Caco-2 (cell line): ENCODE measurements at regions of chr3 and their contacts with region 1.

Region 1: DNA sequence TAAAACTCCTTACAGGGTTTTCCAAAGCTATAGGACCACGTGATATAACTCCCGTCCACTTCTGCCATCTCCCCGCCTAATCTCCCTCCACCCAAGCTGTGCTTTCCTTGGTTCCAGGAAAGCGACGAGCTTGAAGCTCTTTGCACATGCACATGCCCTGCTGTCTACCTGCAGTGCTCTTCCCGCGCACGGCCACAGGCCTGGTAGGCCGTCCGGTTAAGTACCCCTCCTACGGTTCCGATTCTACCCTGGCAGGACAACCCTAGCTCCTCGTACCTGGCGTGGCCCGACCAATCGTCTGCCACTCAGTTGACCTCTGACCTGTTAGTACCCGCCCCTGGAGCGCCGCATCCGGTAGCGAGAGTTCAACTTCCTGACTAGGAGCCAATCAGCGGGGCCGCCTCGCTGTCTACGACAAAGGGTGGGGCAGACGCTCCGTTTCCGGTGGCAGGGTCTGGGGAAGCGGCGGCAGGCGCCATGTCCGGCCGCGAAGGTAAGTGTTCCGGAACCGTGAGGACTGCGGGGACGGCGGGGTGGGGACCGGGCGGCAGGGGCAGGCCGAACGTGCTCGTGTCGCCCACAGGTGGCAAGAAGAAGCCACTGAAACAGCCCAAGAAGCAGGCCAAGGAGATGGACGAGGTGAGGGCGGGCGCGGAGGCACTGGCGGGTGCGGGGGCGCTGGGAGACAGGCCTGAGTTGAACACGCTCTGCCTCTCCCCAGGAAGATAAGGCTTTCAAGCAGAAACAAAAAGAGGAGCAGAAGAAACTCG is at the starts of genes CCDC51 and TMA7:
- DNase-seq: peak; percentile 98 to 99
- H3K4me3 ChIP-seq: peak within 1 kb of the TSS; percentile 91
- H3K4me3 Mint-ChIP-seq: peak within 1 kb of the TSS; percentile 90
- H3K27ac Mint-ChIP-seq: peak within 1 kb of the TSS; percentile 75
- H3K4me1 ChIP-seq: peaks cover 17% of the 10 kb centered on the region
- H3K4me1 Mint-ChIP-seq: peaks cover 10% of the 10 kb centered on the region
- H3K27me3 ChIP-seq: no peaks in the 10 kb centered on the region
- H3K27me3 Mint-ChIP-seq: no peaks in the 10 kb centered on the region
- CTCF ChIP-seq: no peak
- total RNA-seq, gene CCDC51: 48.9 and 59.5 TPM in 2 replicates
- total RNA-seq, gene TMA7: 205 and 227 TPM in 2 replicates

Region 2: GRCh38 chr3:48194446-48195071 is 245.4 kb before region 1 on chr3:
- CTCF ChIA-PET with region 1: interaction called, 35 read pairs
- POLR2A ChIA-PET with region 1: no interaction called
- intact Hi-C with region 1: loop called (anchors 5 kb)
- DNase-seq: peak; percentile 63 to 79
- H3K4me3 ChIP-seq: no peak overlapping the region
- H3K4me3 Mint-ChIP-seq: no peak overlapping the region
- H3K27ac Mint-ChIP-seq: no peak overlapping the region
- H3K4me1 ChIP-seq: peaks cover 4% of the 10 kb centered on the region; the same call in 1 of the 2 replicates
- H3K4me1 Mint-ChIP-seq: no peaks in the 10 kb centered on the region
- H3K27me3 ChIP-seq: no peaks in the 10 kb centered on the region
- H3K27me3 Mint-ChIP-seq: no peaks in the 10 kb centered on the region
- CTCF ChIP-seq: peak; percentile 72 to 85

Region 3: GRCh38 chr3:48268381-48269183 is 171.4 kb before region 1 on chr3:
- CTCF ChIA-PET with region 1: interaction called, 71 read pairs
- POLR2A ChIA-PET with region 1: interaction called, 6 read pairs
- intact Hi-C with region 1: loop called (anchors 1 kb)
- DNase-seq: peak; percentile 53 to 60
- H3K4me3 ChIP-seq: no peak overlapping the region
- H3K4me3 Mint-ChIP-seq: peak overlapping the region; percentile 48
- H3K27ac Mint-ChIP-seq: peak overlapping the region; percentile 72
- H3K4me1 ChIP-seq: peaks cover 16% of the 10 kb centered on the region
- H3K4me1 Mint-ChIP-seq: peaks cover 25% of the 10 kb centered on the region
- H3K27me3 ChIP-seq: no peaks in the 10 kb centered on the region
- H3K27me3 Mint-ChIP-seq: no peaks in the 10 kb centered on the region
- CTCF ChIP-seq: no peak

Region 4: GRCh38 chr3:48415554-48415953 is 24.5 kb before region 1 on chr3:
- CTCF ChIA-PET with region 1: interaction called, 405 read pairs
- POLR2A ChIA-PET with region 1: no interaction called
- intact Hi-C with region 1: no loop called
- DNase-seq: no peak
- H3K4me3 ChIP-seq: no peak overlapping the region
- H3K4me3 Mint-ChIP-seq: no peak overlapping the region
- H3K27ac Mint-ChIP-seq: peak overlapping the region; percentile 39
- H3K4me1 ChIP-seq: no peaks in the 10 kb centered on the region
- H3K4me1 Mint-ChIP-seq: peaks cover 5% of the 10 kb centered on the region
- H3K27me3 ChIP-seq: no peaks in the 10 kb centered on the region
- H3K27me3 Mint-ChIP-seq: no peaks in the 10 kb centered on the region
- CTCF ChIP-seq: peak in 1 of 2 experiments; percentile 35

Region 5: DNA sequence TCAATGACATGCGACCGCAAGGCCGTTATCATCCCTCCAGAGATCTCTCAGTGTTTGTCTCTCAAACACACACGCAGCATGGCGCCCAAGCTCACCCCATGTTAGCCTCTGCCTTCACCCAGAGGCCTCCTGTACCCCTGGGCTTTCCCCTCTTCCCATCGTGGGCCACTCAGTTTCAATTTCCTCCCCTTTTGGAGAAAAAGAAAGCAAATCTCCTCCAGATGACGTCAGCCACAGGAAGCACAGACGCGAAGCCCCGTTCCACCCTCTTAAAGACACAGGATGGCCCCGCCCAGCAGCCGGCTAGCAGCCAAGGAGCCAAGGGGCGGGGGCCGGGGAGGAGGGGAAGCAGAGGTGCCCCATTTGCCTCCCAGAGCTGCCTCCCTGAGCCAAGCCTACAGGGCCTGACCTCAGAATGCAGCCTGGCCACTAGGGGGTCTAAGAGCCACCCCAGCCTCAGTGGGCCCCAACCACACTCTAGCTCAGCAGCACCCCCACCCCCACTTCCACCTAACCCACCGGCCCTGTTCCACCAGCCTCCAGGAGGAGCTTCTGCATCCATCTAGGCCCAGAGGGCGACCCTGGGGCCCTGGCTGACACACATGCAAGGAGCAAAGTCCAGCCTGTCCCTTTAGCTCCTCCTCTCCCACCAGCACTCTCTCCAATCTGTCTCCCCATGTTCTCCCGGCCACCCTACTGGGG is 33.1 kb after region 1 on chr3:
- CTCF ChIA-PET with region 1: interaction called, 26 read pairs
- POLR2A ChIA-PET with region 1: interaction called, 14 read pairs
- intact Hi-C with region 1: no loop called
- DNase-seq: peak; percentile 98 to 99
- H3K4me3 ChIP-seq: peak overlapping the region; percentile 39
- H3K4me3 Mint-ChIP-seq: peak overlapping the region; percentile 88
- H3K27ac Mint-ChIP-seq: peak overlapping the region; percentile 97
- H3K4me1 ChIP-seq: peaks cover 22% of the 10 kb centered on the region; the same call in 1 of the 2 replicates
- H3K4me1 Mint-ChIP-seq: peaks cover 20% of the 10 kb centered on the region
- H3K27me3 ChIP-seq: no peaks in the 10 kb centered on the region
- H3K27me3 Mint-ChIP-seq: no peaks in the 10 kb centered on the region
- CTCF ChIP-seq: peak; percentile 78

Region 6: GRCh38 chr3:48556793-48557626 is 117.0 kb after region 1 on chr3 and contains the start of gene PFKFB4:
- CTCF ChIA-PET with region 1: interaction called, 17 read pairs
- POLR2A ChIA-PET with region 1: interaction called, 4 read pairs
- intact Hi-C with region 1: no loop called
- DNase-seq: peak; percentile 99
- H3K4me3 ChIP-seq: peak within 1 kb of the TSS; percentile 62
- H3K4me3 Mint-ChIP-seq: peak within 1 kb of the TSS; percentile 81
- H3K27ac Mint-ChIP-seq: peak within 1 kb of the TSS; percentile 63
- H3K4me1 ChIP-seq: peaks cover 28% of the 10 kb centered on the region
- H3K4me1 Mint-ChIP-seq: peaks cover 21% of the 10 kb centered on the region
- H3K27me3 ChIP-seq: no peaks in the 10 kb centered on the region
- H3K27me3 Mint-ChIP-seq: no peaks in the 10 kb centered on the region
- CTCF ChIP-seq: no peak
- total RNA-seq, gene PFKFB4: 11.2 and 14.4 TPM in 2 replicates